Transverse colon (tissue), 4 donors: ENCODE measurements at regions of chr1 and their contacts with region 1.

Region 1: GRCh38 chr1:235866913-235867845 is 473 bp upstream of the LYST start:
- DNase-seq: peak; percentile 97
- H3K4me3 ChIP-seq: peak overlapping the region; percentile 91 to 97 (median 96)
- H3K27ac ChIP-seq: peak overlapping the region; percentile 94 to 100 (median 98)
- H3K4me1 ChIP-seq: peaks cover 4 to 35% (median 11%) of the 10 kb centered on the region in 4 donors
- H3K27me3 ChIP-seq: no peaks in the 10 kb centered on the region
- CTCF ChIP-seq: no peak
- EP300 ChIP-seq: no peak
- POLR2A ChIP-seq: peak; percentile 69

Region 2: DNA sequence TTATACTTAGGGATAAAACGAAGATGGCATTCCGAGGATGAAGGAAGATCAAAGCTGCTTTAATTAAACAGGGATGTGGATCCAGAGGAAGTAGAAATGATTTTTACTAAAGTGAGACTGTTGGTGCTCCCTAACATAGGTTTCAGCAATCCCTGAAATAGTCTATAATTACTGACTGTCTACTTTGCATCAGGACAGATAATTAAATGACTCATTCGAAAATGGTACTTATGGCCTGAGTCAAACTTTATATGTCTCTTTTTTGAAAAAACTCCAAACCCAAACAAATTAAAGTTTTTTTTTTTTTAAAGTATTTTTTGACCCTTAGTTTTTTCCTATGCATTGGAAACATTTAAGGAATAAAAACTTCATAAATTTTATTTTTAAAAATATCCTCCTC is 90.8 kb before region 1 on chr1:
- in situ Hi-C with region 1: no loop called
- intact Hi-C with region 1: no loop called
- DNase-seq: no peak
- H3K4me3 ChIP-seq: no peak overlapping the region
- H3K27ac ChIP-seq: no peak overlapping the region
- H3K4me1 ChIP-seq: no peaks in the 10 kb centered on the region
- H3K27me3 ChIP-seq: no peaks in the 10 kb centered on the region
- CTCF ChIP-seq: no peak
- EP300 ChIP-seq: no peak
- POLR2A ChIP-seq: no peak

Region 3: DNA sequence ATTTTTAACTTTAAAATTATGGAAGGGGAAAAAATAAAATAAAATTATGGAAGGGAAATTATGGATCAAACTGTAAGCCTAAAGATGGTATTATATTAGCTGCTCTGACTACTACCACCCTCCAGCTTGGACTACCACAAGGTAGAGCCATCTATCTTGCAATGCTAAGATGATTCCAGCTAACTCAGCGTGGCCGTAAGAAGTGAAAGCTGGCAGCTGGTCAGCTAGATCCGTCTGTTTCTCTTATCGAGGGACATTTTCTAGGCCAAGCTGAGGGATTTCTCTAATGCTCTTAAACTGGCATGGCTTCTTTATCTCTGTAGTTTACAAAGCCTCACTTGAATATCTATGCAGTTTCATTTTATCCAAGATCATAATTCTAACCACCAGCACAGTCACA is 32.0 kb before region 1 on chr1:
- in situ Hi-C with region 1: no loop called
- intact Hi-C with region 1: loop called (anchors 2 kb)
- DNase-seq: peak; percentile 25
- H3K4me3 ChIP-seq: peak overlapping the region in 3 of 4 donors; percentile 9 to 22 (median 10)
- H3K27ac ChIP-seq: peak overlapping the region in 3 of 4 donors; percentile 14 to 54 (median 33)
- H3K4me1 ChIP-seq: peaks cover 0 to 15% (median 13%) of the 10 kb centered on the region in 4 donors
- H3K27me3 ChIP-seq: no peaks in the 10 kb centered on the region
- CTCF ChIP-seq: no peak
- EP300 ChIP-seq: no peak
- POLR2A ChIP-seq: no peak

Region 4: DNA sequence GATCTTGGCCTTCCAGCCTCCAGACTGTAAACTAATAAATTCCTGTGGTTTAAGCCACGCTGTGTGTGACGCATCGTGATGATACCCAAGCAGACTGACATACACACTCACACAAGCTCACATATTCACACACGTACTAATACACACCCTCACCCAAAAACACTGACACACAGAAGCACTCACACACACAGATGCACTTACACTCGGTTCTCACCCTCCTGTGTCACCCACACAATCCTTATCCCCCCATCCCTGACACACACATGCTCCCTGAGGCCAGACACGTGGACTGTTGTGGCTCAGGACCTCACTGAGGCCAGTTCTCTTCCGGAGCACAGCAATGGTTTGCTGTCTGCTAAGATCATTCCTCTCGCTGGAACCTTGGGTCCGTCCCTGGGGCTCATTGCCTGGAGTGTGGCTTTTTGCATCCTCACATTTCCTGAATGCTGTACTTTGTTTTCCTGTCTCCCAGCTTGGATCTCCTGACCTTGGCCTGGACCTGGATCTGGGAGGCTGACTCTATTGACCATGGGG is 76.5 kb after region 1 on chr1:
- in situ Hi-C with region 1: no loop called
- intact Hi-C with region 1: no loop called
- DNase-seq: no peak
- H3K4me3 ChIP-seq: no peak overlapping the region
- H3K27ac ChIP-seq: no peak overlapping the region
- H3K4me1 ChIP-seq: peaks cover 0 to 16% (median 0%) of the 10 kb centered on the region in 4 donors
- H3K27me3 ChIP-seq: no peaks in the 10 kb centered on the region
- CTCF ChIP-seq: no peak
- EP300 ChIP-seq: no peak
- POLR2A ChIP-seq: no peak

Region 5: DNA sequence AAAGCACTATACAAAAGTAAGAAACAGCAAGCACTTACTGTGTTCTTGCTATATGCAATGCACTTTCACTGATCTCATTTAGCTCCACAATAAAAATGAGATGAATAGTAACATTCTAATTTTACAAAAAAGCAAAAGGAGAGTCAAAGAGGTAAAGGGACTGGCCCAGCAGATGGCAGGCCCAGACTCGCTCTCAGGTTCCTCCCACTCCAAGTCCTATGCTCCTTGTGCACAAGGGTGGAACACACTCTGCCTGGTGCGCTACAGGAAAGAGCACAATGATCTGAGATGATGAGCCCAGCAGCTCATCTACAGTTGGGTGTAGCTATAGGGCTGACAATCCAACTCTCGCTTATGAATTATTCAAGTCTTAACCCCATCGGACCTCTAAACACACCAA is 93.6 kb after region 1 on chr1:
- in situ Hi-C with region 1: loop called in 2 of 4 experiments (anchors 10 to 25 kb)
- intact Hi-C with region 1: no loop called
- DNase-seq: no peak
- H3K4me3 ChIP-seq: no peak overlapping the region
- H3K27ac ChIP-seq: no peak overlapping the region
- H3K4me1 ChIP-seq: peaks cover 0 to 3% (median 1%) of the 10 kb centered on the region in 4 donors
- H3K27me3 ChIP-seq: no peaks in the 10 kb centered on the region
- CTCF ChIP-seq: no peak
- EP300 ChIP-seq: no peak
- POLR2A ChIP-seq: no peak